ENCODE measurements at regions of chr9 and their contacts with region 1.

Region 1: GRCh38 chr9:73093740-73094379 is 57.8 kb upstream of the ANXA1 start:
- DNase-seq: no peak
- H3K4me3 ChIP-seq: no peak overlapping the region
- H3K27ac ChIP-seq: no peak overlapping the region
- H3K4me1 ChIP-seq: no peaks in the 10 kb centered on the region
- H3K27me3 ChIP-seq: no peaks in the 10 kb centered on the region
- CTCF ChIP-seq: no peak
- EP300 ChIP-seq: no peak
- POLR2A ChIP-seq: no peak

Region 2: DNA sequence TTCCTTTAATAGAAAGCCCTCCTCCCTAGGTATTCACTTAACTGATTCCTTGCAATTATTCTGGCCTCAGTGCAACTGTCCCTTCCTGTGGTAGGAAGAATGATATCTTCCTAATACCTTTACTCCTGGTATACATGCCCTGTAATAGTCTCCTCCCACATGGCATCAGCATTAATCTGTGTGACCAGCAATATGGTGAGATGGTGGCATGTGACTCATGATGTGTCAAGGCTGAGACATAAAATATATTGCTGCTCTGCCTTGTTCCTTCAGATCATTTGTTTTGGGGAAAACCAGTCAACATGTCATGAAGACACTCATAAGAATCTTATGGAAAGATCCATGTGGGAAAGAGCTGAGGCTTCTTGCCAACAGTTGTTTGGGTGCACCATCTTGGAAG is 1823.3 kb before region 1 on chr9:
- intact Hi-C with region 1: loop called in 1 of 4 experiments (anchors 5 kb)
- DNase-seq: no peak
- H3K4me3 ChIP-seq: no peak overlapping the region
- H3K27ac ChIP-seq: no peak overlapping the region
- H3K4me1 ChIP-seq: no peaks in the 10 kb centered on the region
- H3K27me3 ChIP-seq: no peaks in the 10 kb centered on the region
- CTCF ChIP-seq: no peak
- EP300 ChIP-seq: no peak
- POLR2A ChIP-seq: no peak

Region 3: DNA sequence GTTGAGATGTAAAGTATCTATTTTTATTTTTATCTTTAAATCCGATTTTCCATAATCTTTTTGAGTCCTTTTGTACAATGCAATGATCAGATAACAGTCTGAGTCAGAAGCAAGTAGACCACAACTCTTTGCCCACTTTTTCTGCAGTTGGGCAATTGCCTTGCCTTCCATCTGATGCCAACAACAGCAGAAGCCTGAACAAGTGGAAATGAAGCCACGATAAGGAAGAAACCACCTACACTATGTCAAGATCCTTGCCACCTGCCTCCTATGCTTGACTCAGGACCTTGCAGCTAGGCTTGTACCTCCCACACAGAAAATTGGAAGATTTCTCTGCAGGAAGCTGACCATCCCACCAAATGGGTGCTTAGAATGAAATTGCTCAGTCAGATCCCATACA is 136.4 kb after region 1 on chr9:
- intact Hi-C with region 1: no loop called
- DNase-seq: no peak
- H3K4me3 ChIP-seq: no peak overlapping the region
- H3K27ac ChIP-seq: no peak overlapping the region
- H3K4me1 ChIP-seq: no peaks in the 10 kb centered on the region
- H3K27me3 ChIP-seq: no peaks in the 10 kb centered on the region
- CTCF ChIP-seq: no peak
- EP300 ChIP-seq: no peak
- POLR2A ChIP-seq: no peak